CD8-positive, alpha-beta T cell (primary cell): ENCODE measurements at regions of chr5 and their contacts with region 1.

Region 1: GRCh38 chr5:96934708-96935558 is 947 bp upstream of the LNPEP start:
- DNase-seq: peak; percentile 88 to 98 (median 93)
- ATAC-seq: peak; percentile 64
- H3K4me3 ChIP-seq: peak overlapping the region; percentile 88 to 96
- H3K4me3 Mint-ChIP-seq: peak overlapping the region; percentile 89
- H3K27ac ChIP-seq: peak overlapping the region; percentile 88 to 89
- H3K27ac Mint-ChIP-seq: peak overlapping the region; percentile 96
- H3K4me1 ChIP-seq: peaks cover 60% of the 10 kb centered on the region
- H3K4me1 Mint-ChIP-seq: peaks cover 69% of the 10 kb centered on the region
- H3K27me3 ChIP-seq: no peaks in the 10 kb centered on the region
- H3K27me3 Mint-ChIP-seq: no peaks in the 10 kb centered on the region
- CTCF ChIP-seq: no peak

Region 2: GRCh38 chr5:95554647-95555548 is 1380.0 kb before region 1 on chr5 and contains the starts of genes ARSK and SKIC3:
- CTCF ChIA-PET with region 1: no interaction called
- POLR2A ChIA-PET with region 1: no interaction called
- intact Hi-C with region 1: loop called in 1 of 2 experiments (anchors 1 kb)
- DNase-seq: peak; percentile 80 to 99 (median 91)
- ATAC-seq: peak; percentile 86
- H3K4me3 ChIP-seq: peak within 1 kb of the TSS; percentile 64 to 77
- H3K4me3 Mint-ChIP-seq: peak within 1 kb of the TSS; percentile 96
- H3K27ac ChIP-seq: peak within 1 kb of the TSS; percentile 74 to 84
- H3K27ac Mint-ChIP-seq: peak within 1 kb of the TSS; percentile 98
- H3K4me1 ChIP-seq: peaks cover 18% of the 10 kb centered on the region
- H3K4me1 Mint-ChIP-seq: peaks cover 47% of the 10 kb centered on the region
- H3K27me3 ChIP-seq: no peaks in the 10 kb centered on the region
- H3K27me3 Mint-ChIP-seq: no peaks in the 10 kb centered on the region
- CTCF ChIP-seq: no peak
- total RNA-seq, gene ARSK: 2.6 to 3.1 TPM
- total RNA-seq, gene SKIC3: 46.7 to 51.8 TPM

Region 3: DNA sequence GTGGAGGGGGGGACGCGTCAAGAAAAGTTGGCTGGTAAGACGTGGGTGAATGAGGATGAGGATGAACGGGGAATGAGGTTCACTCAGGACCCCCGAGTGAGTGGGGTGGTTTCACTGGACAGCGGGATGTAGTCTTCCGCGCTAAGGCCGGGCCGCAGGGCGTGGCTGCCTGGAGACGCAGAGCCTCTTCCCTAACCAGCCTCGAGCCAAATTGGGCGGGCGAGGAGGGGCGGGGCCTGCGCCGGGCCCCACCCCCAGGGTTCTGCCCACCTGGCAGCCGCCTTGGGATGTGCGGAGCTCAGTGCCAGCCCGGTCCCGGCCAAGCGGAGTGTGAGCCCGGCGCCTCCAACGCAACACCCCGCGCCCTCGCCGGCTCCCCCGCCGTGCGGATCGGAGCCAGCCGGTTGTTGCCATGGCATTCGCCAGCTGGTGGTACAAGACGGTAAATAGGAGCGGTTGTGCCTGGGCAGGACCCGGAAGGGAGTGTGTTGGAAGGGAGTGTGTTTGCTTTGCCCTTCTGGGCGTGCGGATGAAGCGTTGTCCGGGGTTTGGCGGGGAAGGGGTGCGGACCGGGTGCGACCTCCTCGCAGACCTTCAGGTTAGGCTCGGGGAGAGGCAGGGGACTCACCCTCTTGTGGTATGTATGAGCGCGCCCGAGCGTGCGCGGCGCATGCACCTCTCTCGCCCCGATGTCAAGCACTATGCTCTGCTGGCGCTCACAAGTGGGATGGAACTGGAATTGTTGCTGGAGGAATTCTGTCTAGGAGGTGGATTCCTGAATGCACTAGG is 272.0 kb before region 1 on chr5:
- CTCF ChIA-PET with region 1: no interaction called
- POLR2A ChIA-PET with region 1: interaction called, 4 read pairs
- intact Hi-C with region 1: loop called (anchors 1 to 10 kb)
- DNase-seq: peak; percentile 71 to 89 (median 83)
- ATAC-seq: peak; percentile 68
- H3K4me3 ChIP-seq: peak overlapping the region; percentile 54 to 86
- H3K4me3 Mint-ChIP-seq: peak overlapping the region; percentile 94
- H3K27ac ChIP-seq: peak overlapping the region; percentile 72 to 81
- H3K27ac Mint-ChIP-seq: peak overlapping the region; percentile 98
- H3K4me1 ChIP-seq: peaks cover 23% of the 10 kb centered on the region
- H3K4me1 Mint-ChIP-seq: peaks cover 51% of the 10 kb centered on the region
- H3K27me3 ChIP-seq: no peaks in the 10 kb centered on the region
- H3K27me3 Mint-ChIP-seq: no peaks in the 10 kb centered on the region
- CTCF ChIP-seq: no peak

Region 4: DNA sequence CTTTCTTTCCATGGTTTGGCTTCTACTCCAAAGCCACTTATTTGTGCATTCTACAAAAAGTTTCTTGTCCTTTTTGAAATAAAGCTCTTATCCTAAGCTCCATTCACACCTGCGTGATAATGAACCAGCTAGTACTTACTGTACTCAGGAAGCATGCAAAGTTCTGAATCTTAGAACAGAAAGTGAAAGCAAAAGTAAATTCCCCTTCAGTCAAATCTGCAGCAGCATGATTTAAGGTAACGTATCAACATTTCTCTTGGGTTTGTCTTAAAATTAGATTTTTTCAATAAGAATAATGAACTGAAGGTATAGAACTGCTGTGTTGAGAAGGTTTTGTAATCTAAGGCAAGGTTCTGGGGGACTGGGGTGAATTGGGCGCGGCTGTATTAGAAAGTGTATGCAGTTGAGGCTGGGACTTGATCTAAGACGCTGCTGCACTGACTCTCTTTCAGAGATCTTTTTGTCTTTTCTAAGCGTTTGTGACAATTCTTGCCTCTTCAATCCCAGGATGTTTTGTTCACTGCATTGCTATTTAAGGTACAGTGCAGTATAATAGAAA is 58.6 kb before region 1 on chr5 and contains the start of gene ERAP2:
- CTCF ChIA-PET with region 1: interaction called, 3 read pairs
- POLR2A ChIA-PET with region 1: interaction called, 17 read pairs
- intact Hi-C with region 1: loop called (anchors 1 to 2 kb)
- DNase-seq: peak in 2 of 9 experiments; percentile 63 to 79
- ATAC-seq: peak; percentile 80
- H3K4me3 ChIP-seq: peak within 1 kb of the TSS; percentile 74 to 76
- H3K4me3 Mint-ChIP-seq: peak within 1 kb of the TSS; percentile 96
- H3K27ac ChIP-seq: peak within 1 kb of the TSS; percentile 75 to 78
- H3K27ac Mint-ChIP-seq: peak within 1 kb of the TSS; percentile 95
- H3K4me1 ChIP-seq: peaks cover 38% of the 10 kb centered on the region
- H3K4me1 Mint-ChIP-seq: peaks cover 71% of the 10 kb centered on the region
- H3K27me3 ChIP-seq: no peaks in the 10 kb centered on the region
- H3K27me3 Mint-ChIP-seq: no peaks in the 10 kb centered on the region
- CTCF ChIP-seq: no peak
- total RNA-seq, gene ERAP2: 46.5 to 49.9 TPM

Region 5: DNA sequence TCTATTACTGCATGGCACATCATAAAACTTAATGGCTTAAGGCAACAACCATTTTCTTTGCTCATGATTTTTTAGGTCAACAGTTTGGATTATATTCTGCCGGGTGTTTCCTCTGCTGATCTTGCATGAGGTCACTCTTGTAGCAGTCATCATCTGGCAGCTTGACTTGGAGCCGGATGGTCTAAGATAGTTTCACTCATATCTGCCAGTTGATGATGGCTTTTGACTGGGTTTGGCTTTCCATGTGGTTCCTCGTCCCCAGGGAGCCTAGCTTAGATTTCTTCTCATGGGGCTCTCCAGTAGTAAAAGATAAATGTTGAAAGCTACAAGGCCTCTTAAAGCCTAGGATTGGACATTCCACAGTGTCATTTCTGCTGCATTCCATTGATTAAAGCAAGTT is 28.3 kb after region 1 on chr5:
- CTCF ChIA-PET with region 1: interaction called, 4 read pairs
- POLR2A ChIA-PET with region 1: interaction called, 16 read pairs
- intact Hi-C with region 1: loop called (anchors 1 kb)
- DNase-seq: peak in 4 of 9 experiments; percentile 22 to 58 (median 26)
- ATAC-seq: peak; percentile 39
- H3K4me3 ChIP-seq: no peak overlapping the region
- H3K4me3 Mint-ChIP-seq: peak overlapping the region; percentile 68
- H3K27ac ChIP-seq: peak overlapping the region; percentile 30 to 44
- H3K27ac Mint-ChIP-seq: peak overlapping the region; percentile 94
- H3K4me1 ChIP-seq: peaks cover 68% of the 10 kb centered on the region
- H3K4me1 Mint-ChIP-seq: peaks cover 80% of the 10 kb centered on the region
- H3K27me3 ChIP-seq: no peaks in the 10 kb centered on the region
- H3K27me3 Mint-ChIP-seq: no peaks in the 10 kb centered on the region
- CTCF ChIP-seq: no peak

Region 6: DNA sequence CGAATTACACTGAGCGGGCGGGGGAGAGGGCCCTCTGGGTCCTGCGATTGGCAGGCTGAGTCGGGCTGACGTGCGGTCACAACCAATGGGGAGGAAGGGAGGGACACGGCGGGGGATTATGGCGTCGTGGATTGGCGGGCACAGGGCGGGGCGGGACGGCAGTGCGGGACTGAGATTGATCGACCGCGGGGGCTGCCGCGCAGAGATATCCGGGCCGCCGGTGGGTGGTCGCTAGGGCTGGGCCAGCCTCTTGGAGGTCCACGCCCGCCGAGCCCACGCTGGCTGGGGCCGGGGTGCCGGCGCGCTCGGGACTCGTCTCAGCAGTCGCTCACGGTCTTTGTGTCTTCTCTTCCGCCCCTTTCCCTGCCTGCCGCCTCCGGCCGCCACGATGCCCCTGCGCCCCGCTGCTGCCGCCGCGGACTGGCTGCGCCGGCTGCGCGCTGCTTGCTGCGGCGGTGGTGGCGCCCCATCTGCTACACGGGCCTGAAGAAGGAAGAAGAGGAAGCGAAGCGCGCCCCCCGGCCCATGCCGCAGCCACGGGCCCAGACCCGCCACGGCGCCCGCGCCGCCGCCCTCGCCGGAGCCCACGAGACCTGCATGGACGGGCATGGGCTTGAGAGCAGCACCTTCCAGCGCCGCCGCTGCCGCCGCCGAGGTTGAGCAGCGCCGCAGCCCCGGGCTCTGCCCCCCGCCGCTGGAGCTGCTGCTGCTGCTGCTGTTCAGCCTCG is 1838.7 kb after region 1 on chr5 and contains the start of gene RGMB:
- CTCF ChIA-PET with region 1: no interaction called
- POLR2A ChIA-PET with region 1: no interaction called
- intact Hi-C with region 1: loop called in 1 of 2 experiments (anchors 5 kb)
- DNase-seq: peak; percentile 71 to 92 (median 89)
- ATAC-seq: peak; percentile 86
- H3K4me3 ChIP-seq: peak within 1 kb of the TSS; percentile 69 to 70
- H3K4me3 Mint-ChIP-seq: peak within 1 kb of the TSS; percentile 95
- H3K27ac ChIP-seq: peak within 1 kb of the TSS; percentile 37 to 53
- H3K27ac Mint-ChIP-seq: peak within 1 kb of the TSS; percentile 87
- H3K4me1 ChIP-seq: peaks cover 41% of the 10 kb centered on the region
- H3K4me1 Mint-ChIP-seq: peaks cover 56% of the 10 kb centered on the region
- H3K27me3 ChIP-seq: peaks cover 0 to 12% of the 10 kb centered on the region in 2 experiments
- H3K27me3 Mint-ChIP-seq: peaks cover 24% of the 10 kb centered on the region
- CTCF ChIP-seq: no peak
- total RNA-seq, gene RGMB: 5.8 to 6.6 TPM